Endothelial cell of umbilical vein (primary cell): ENCODE measurements at regions of chr6 and their contacts with region 1.

Region 1: GRCh38 chr6:72411872-72412708 is 209.8 kb upstream of the KCNQ5 start:
- DNase-seq: peak; percentile 91
- H3K4me3 ChIP-seq: no peak overlapping the region
- H3K27ac ChIP-seq: no peak overlapping the region
- H3K4me1 ChIP-seq: no peaks in the 10 kb centered on the region
- H3K27me3 ChIP-seq: peaks cover 7 to 10% of the 10 kb centered on the region in 2 experiments
- CTCF ChIP-seq: peak; percentile 100
- POLR2A ChIP-seq: no peak

Region 2: GRCh38 chr6:72250664-72251063 is 161.4 kb before region 1 on chr6:
- CTCF ChIA-PET with region 1: interaction called, 57 read pairs
- POLR2A ChIA-PET with region 1: no interaction called
- dilution Hi-C with region 1: no loop called
- intact Hi-C with region 1: loop called (anchors 1 kb)
- DNase-seq: no peak
- H3K4me3 ChIP-seq: no peak overlapping the region
- H3K27ac ChIP-seq: no peak overlapping the region
- H3K4me1 ChIP-seq: no peaks in the 10 kb centered on the region
- H3K27me3 ChIP-seq: no peaks in the 10 kb centered on the region
- CTCF ChIP-seq: no peak
- POLR2A ChIP-seq: no peak

Region 3: DNA sequence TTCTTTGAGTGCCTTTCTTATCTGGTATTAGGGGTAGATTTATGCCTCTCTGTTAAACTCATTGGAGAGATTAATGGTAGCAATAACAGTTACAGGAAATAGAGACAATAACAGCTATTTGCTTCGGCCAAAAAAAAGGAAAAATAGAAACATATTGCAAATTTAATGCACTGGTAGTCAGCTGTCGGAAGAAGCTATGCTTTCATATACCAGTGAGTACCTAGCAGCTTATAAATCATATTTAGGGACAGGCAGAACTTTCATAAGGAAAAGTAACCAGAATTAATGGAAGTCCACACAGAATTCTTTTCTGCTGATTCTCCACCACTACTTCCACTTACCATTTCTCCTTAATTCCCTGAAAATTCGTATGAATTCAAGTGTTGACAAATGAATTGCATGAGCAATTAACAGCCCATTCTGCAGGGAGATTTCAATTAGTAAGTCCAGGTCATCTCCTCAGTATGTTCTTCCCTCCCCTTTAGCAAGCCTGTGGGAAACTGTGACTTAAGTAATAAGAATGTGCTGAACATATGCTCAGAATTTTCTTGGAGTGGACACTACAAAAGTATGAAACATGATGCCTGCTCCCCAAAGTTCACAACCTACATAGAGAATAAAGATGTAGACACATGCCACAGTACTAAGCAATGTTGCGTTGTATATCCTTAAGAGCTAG is 13.1 kb after region 1 on chr6:
- CTCF ChIA-PET with region 1: interaction called, 37 read pairs
- POLR2A ChIA-PET with region 1: no interaction called
- dilution Hi-C with region 1: no loop called
- intact Hi-C with region 1: no loop called
- DNase-seq: no peak
- H3K4me3 ChIP-seq: no peak overlapping the region
- H3K27ac ChIP-seq: no peak overlapping the region
- H3K4me1 ChIP-seq: no peaks in the 10 kb centered on the region
- H3K27me3 ChIP-seq: peaks cover 0 to 8% of the 10 kb centered on the region in 2 experiments
- CTCF ChIP-seq: no peak
- POLR2A ChIP-seq: no peak

Region 4: DNA sequence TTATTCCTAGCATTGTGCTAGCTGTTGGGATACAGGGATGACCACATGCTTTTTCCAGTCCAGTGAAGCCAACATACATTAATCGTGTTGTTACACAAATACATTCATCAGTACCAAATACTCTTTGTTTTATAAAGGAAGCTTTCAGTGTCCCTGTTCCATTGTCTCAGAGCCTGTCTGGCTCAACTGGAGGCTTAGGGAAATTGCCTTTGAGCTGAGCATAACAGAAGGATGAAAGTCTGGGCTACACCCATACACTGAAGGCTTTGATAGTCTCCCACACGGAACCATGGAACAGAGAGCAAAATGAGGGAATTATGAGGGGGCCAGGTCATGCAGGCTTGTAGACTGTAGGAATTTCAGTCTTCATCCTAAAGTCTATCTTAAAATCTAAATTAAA is 83.4 kb after region 1 on chr6:
- CTCF ChIA-PET with region 1: no interaction called
- POLR2A ChIA-PET with region 1: no interaction called
- dilution Hi-C with region 1: no loop called
- intact Hi-C with region 1: no loop called
- DNase-seq: no peak
- H3K4me3 ChIP-seq: no peak overlapping the region
- H3K27ac ChIP-seq: no peak overlapping the region
- H3K4me1 ChIP-seq: no peaks in the 10 kb centered on the region
- H3K27me3 ChIP-seq: no peaks in the 10 kb centered on the region
- CTCF ChIP-seq: no peak
- POLR2A ChIP-seq: no peak

Region 5: GRCh38 chr6:72622094-72622940 is 210.2 kb after region 1 on chr6:
- CTCF ChIA-PET with region 1: interaction called, 44 read pairs
- POLR2A ChIA-PET with region 1: no interaction called
- dilution Hi-C with region 1: no loop called
- intact Hi-C with region 1: loop called (anchors 5 kb)
- DNase-seq: no peak
- H3K4me3 ChIP-seq: peak overlapping the region in 1 of 3 experiments; percentile 23
- H3K27ac ChIP-seq: no peak overlapping the region
- H3K4me1 ChIP-seq: peaks cover 8% of the 10 kb centered on the region
- H3K27me3 ChIP-seq: peaks cover 47 to 76% of the 10 kb centered on the region in 2 experiments
- CTCF ChIP-seq: peak in 1 of 2 donors; percentile 11
- POLR2A ChIP-seq: no peak

Region 6: GRCh38 chr6:73309769-73310502 is 897.8 kb after region 1 on chr6:
- CTCF ChIA-PET with region 1: no interaction called
- POLR2A ChIA-PET with region 1: no interaction called
- dilution Hi-C with region 1: no loop called
- intact Hi-C with region 1: loop called (anchors 1 kb)
- DNase-seq: peak; percentile 68
- H3K4me3 ChIP-seq: peak overlapping the region; percentile 60 to 83 (median 71)
- H3K27ac ChIP-seq: peak overlapping the region; percentile 19
- H3K4me1 ChIP-seq: peaks cover 12% of the 10 kb centered on the region
- H3K27me3 ChIP-seq: peaks cover 3 to 4% of the 10 kb centered on the region in 2 experiments
- CTCF ChIP-seq: peak; percentile 54 to 69
- POLR2A ChIP-seq: peak; percentile 86